ENCODE measurements at regions of chr5 and their contacts with region 1.

Region 1: DNA sequence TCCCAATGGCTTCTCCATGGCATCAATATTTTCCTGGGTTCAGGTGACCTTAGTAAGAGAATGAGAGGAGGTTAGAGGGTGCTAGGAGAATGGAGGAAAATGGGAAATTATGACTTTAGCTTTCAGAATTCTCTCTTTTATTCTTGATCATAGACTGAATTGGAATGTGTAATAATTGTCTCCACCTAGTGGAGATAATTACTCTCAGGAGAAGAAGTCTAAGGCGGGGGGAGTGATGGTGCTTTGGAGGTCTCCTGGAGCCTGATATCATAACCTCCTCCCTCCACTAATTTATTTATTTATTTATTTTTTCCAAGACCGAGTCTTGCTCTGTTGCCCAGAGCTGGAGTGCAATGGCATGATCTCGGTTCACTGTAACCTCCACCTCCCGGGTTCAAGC is 221.3 kb downstream of the GRIA1 start:
- DNase-seq: no peak
- ATAC-seq: no peak
- H3K4me3 ChIP-seq: no peak overlapping the region
- H3K27ac ChIP-seq: no peak overlapping the region
- H3K4me1 ChIP-seq: no peaks in the 10 kb centered on the region
- H3K27me3 ChIP-seq: no peaks in the 10 kb centered on the region

Region 2: GRCh38 chr5:153480401-153480800 is 231.4 kb before region 1 on chr5:
- intact Hi-C with region 1: loop called in 1 of 4 experiments (anchors 10 kb)
- DNase-seq: no peak
- ATAC-seq: no peak
- H3K4me3 ChIP-seq: no peak overlapping the region
- H3K27ac ChIP-seq: no peak overlapping the region
- H3K4me1 ChIP-seq: no peaks in the 10 kb centered on the region
- H3K27me3 ChIP-seq: no peaks in the 10 kb centered on the region

Region 3: GRCh38 chr5:153496835-153497234 is 214.9 kb before region 1 on chr5:
- intact Hi-C with region 1: loop called in 2 of 4 experiments (anchors 5 to 10 kb)
- DNase-seq: no peak
- ATAC-seq: no peak
- H3K4me3 ChIP-seq: no peak overlapping the region
- H3K27ac ChIP-seq: no peak overlapping the region
- H3K4me1 ChIP-seq: no peaks in the 10 kb centered on the region
- H3K27me3 ChIP-seq: no peaks in the 10 kb centered on the region

Measured in right cardiac atrium (tissue), 5 donors.